ENCODE measurements at regions of chr1 and their contacts with region 1.

Region 1: DNA sequence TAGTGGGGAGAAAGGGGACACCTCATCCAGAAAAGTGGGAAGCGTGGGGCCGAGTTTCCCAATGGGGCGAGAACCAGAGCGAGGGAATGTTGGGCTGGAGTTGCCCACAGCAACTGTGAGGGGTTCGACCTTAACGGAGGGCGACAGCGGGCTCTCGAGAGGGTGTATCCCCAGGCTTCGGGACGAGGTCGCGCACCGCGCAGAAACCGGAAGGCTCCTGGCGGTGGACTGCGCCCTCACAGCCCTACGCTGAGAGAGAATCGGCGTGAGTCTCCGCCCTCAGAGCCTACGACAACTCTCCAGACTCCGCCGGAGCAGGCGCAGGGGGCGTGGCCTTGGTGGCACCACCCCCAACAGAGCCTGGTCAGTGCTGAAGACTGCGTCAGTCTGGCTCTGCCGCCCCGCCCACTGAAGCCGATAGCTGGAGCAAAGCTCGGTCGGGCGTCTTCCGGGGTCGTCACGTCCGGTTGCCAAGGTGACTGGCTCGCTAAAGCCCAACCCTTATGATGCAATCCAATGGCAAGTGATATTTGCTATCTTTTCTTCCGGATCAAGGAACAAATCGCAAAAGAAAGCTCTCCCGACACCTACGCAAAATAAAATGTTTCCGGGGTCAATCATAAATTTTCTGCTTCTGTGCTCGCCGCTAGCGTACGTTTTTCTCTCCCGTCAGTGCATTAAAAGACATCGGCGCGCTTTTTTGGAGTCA is at the start of gene LRIF1:
- DNase-seq: peak; percentile 100
- H3K4me3 Mint-ChIP-seq: peak within 1 kb of the TSS; percentile 83
- H3K27ac Mint-ChIP-seq: peak within 1 kb of the TSS; percentile 96
- H3K4me1 Mint-ChIP-seq: peaks cover 34% of the 10 kb centered on the region
- H3K27me3 Mint-ChIP-seq: peaks cover 8% of the 10 kb centered on the region
- total RNA-seq, gene LRIF1: 12.0 to 12.3 TPM

Region 2: GRCh38 chr1:110630839-110631663 is 332.8 kb before region 1 on chr1:
- CTCF ChIA-PET with region 1: no interaction called
- intact Hi-C with region 1: loop called (anchors 5 kb)
- DNase-seq: peak; percentile 92
- H3K4me3 Mint-ChIP-seq: no peak overlapping the region
- H3K27ac Mint-ChIP-seq: no peak overlapping the region
- H3K4me1 Mint-ChIP-seq: peaks cover 54% of the 10 kb centered on the region
- H3K27me3 Mint-ChIP-seq: no peaks in the 10 kb centered on the region

Region 3: DNA sequence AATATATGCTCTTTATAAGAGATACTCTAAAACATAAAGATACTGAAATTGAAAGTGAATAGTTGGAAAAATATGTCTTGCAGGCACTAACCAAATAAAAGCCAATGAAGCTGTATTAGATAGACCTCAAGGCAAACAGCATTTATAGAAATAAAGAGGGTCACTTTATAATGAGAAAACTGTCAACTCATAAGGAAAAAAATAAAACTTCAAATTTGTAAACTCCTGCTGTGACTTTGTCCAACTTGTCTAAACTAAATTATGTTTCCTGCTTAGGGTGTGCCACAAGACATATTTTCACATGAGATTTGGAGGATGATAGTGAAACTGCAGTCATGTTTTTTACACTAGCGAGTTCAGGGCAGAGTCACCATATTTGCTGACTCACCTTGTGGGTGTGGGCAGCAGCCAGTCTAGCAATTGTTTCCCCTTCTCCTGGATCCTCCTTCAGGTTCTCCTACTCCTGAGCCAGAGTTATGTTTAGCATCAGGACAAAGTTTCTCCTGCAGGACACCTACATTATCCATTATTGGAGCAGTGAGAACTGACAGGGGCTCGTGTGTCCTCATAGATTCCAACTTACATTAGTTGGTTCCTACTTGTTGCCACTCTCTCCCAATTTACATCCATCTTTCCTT is 47.1 kb before region 1 on chr1:
- CTCF ChIA-PET with region 1: no interaction called
- intact Hi-C with region 1: loop called (anchors 1 kb)
- DNase-seq: peak; percentile 52
- H3K4me3 Mint-ChIP-seq: peak overlapping the region; percentile 10
- H3K27ac Mint-ChIP-seq: peak overlapping the region; percentile 15
- H3K4me1 Mint-ChIP-seq: peaks cover 14% of the 10 kb centered on the region
- H3K27me3 Mint-ChIP-seq: peaks cover under 1% of the 10 kb centered on the region

Region 4: GRCh38 chr1:111015225-111015624 is 51.4 kb after region 1 on chr1:
- CTCF ChIA-PET with region 1: no interaction called
- intact Hi-C with region 1: no loop called
- DNase-seq: no peak
- H3K4me3 Mint-ChIP-seq: no peak overlapping the region
- H3K27ac Mint-ChIP-seq: no peak overlapping the region
- H3K4me1 Mint-ChIP-seq: no peaks in the 10 kb centered on the region
- H3K27me3 Mint-ChIP-seq: peaks cover 15% of the 10 kb centered on the region

Region 5: DNA sequence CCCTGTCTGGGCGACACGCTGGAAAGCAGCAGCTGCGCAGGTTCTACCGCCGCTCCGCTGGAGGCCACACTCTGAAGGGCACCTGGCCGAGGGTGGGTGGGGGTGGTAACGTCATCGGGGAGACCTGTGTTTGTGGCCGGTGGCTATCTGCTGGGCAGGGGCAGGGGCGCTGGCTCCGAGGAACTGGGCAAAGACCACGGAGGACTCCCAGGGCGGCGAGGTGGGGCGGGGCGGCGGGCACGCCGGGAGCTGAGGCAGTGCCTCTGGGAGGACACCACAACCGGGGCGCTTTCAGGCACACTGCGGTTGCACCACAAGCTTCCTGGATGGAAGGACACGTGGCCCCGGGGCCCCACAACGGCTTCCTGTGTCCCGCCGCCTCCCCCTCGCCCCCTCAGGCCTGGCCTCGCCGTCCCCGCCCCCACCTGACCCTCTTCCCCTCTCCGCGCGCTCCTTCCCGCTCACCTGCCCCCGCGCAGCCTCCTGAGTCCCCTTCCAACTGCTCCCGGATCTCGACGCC is 239.9 kb after region 1 on chr1:
- CTCF ChIA-PET with region 1: no interaction called
- intact Hi-C with region 1: loop called (anchors 5 kb)
- DNase-seq: peak; percentile 94
- H3K4me3 Mint-ChIP-seq: peak overlapping the region; percentile 98
- H3K27ac Mint-ChIP-seq: peak overlapping the region; percentile 99
- H3K4me1 Mint-ChIP-seq: peaks cover 44% of the 10 kb centered on the region
- H3K27me3 Mint-ChIP-seq: no peaks in the 10 kb centered on the region

Region 6: DNA sequence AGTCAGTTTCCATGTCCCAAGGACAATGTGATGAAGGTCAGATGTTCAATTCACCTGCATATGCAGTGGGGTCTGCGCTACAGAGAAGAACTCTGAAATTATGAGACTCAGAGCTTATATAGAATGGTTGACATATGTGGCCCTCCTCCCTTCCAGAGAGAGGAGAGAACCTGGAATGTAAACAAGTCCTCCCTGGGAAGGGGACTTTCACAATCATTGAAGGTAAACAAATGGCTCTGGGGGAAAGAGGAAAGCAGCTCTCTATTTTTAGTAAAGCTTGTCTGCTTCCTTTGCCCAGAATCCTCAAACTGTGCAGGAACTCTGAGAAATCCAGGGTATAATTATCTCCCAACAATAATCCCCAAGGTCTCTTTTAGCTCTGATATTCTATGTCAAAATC is 453.9 kb after region 1 on chr1:
- CTCF ChIA-PET with region 1: no interaction called
- intact Hi-C with region 1: no loop called
- DNase-seq: no peak
- H3K4me3 Mint-ChIP-seq: no peak overlapping the region
- H3K27ac Mint-ChIP-seq: no peak overlapping the region
- H3K4me1 Mint-ChIP-seq: no peaks in the 10 kb centered on the region
- H3K27me3 Mint-ChIP-seq: no peaks in the 10 kb centered on the region

Measured in activated naive CD4-positive, alpha-beta T cell treated with anti-CD3 and anti-CD28 coated beads for 36 hours (primary cell).